ENCODE measurements at regions of chr19 and their contacts with region 1.

Region 1: DNA sequence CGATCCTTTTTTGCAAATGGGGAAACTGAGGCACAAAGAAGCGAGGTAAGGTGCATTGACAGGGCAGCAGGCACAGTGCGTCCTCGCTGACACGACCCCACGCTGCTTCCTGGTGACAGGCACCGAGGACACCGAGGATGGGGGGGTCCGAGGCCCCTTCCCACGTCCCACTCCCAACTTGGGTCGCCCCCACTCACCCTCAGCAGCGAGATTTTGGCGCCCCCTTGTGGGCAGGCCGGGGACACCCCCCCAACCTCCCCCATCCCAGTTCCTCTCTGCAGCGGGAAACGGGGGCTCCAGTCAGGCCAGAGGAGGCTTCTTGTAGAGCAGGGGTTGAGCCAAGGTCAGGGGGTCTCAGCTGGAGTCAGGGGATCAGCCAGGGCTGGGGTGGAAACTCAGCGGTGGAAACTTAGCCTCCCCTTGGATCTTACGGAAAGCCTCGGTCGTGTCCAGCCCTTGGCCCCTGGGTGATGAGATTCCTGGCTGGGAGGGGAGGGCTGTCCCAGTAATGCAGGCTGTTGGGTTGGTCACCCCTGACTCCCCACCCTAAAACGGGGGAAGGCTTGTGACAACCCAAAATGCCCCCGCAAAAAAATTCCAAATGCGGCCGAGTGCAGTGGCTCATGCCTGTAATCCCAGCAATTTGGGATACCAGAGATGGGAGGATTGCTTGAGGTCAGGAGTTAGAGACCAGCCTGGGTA is 8.2 kb downstream of the SMIM24 start:
- DNase-seq: peak; percentile 47
- ATAC-seq: no peak
- H3K4me3 Mint-ChIP-seq: no peak overlapping the region
- H3K27ac Mint-ChIP-seq: no peak overlapping the region
- H3K4me1 Mint-ChIP-seq: no peaks in the 10 kb centered on the region
- H3K27me3 Mint-ChIP-seq: no peaks in the 10 kb centered on the region
- CTCF ChIP-seq: peak; percentile 77

Region 2: DNA sequence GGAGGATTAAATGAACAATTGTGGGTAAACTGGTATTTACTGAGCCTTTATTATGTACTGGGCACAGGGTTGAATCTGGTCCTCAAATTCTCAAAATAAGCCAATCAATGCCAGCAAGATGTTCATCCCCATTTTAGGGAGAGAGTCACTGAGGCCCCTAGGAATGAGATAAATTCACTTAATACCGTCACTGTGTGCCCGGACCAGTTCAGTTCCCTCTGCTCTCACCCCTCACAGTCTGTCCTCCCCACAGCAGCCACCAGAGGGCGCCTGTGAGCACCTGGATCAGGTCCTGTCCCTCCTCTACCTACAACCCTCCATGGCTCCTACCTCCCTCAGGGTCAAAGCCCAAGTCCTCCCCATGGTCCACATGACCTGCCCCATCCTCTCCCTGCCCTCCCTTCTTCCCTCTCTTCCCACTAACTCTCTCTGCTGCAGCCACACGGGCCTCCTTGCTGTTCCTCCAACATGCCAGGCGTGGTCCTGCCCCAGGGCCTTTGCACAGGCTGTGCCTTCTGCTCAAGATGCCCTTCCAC is 147.7 kb before region 1 on chr19:
- CTCF ChIA-PET with region 1: interaction called, 12 read pairs
- POLR2A ChIA-PET with region 1: interaction called, 3 read pairs
- intact Hi-C with region 1: loop called (anchors 5 kb)
- DNase-seq: peak; percentile 88
- ATAC-seq: peak; percentile 79
- H3K4me3 Mint-ChIP-seq: no peak overlapping the region
- H3K27ac Mint-ChIP-seq: no peak overlapping the region
- H3K4me1 Mint-ChIP-seq: no peaks in the 10 kb centered on the region
- H3K27me3 Mint-ChIP-seq: peaks cover 10% of the 10 kb centered on the region
- CTCF ChIP-seq: peak; percentile 86

Region 3: GRCh38 chr19:3336680-3337523 is 135.2 kb before region 1 on chr19:
- CTCF ChIA-PET with region 1: interaction called, 10 read pairs
- POLR2A ChIA-PET with region 1: no interaction called
- intact Hi-C with region 1: no loop called
- DNase-seq: no peak
- ATAC-seq: no peak
- H3K4me3 Mint-ChIP-seq: no peak overlapping the region
- H3K27ac Mint-ChIP-seq: no peak overlapping the region
- H3K4me1 Mint-ChIP-seq: peaks cover 7% of the 10 kb centered on the region
- H3K27me3 Mint-ChIP-seq: no peaks in the 10 kb centered on the region
- CTCF ChIP-seq: no peak

Region 4: DNA sequence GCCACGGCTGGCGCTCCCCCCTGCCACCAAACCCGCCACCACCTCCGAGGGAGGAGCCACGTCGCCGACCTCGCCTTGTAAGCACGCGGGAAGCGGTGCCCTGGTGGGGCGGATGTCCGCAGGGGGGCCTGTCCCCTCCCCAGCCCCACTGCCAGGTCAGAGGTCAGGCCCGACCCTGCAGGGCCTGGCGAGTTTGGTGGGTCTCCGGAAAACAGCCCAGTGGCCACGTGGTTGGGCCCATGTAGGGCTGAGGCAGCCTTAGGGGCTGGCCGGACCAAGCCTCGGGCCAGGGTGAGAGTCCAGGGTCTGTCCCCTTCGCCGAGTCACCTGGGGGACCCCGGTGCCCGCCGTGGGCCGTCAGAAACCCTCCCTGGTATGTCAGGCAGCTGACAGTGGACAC is 18.3 kb before region 1 on chr19:
- CTCF ChIA-PET with region 1: no interaction called
- POLR2A ChIA-PET with region 1: no interaction called
- intact Hi-C with region 1: no loop called
- DNase-seq: no peak
- ATAC-seq: no peak
- H3K4me3 Mint-ChIP-seq: no peak overlapping the region
- H3K27ac Mint-ChIP-seq: no peak overlapping the region
- H3K4me1 Mint-ChIP-seq: no peaks in the 10 kb centered on the region
- H3K27me3 Mint-ChIP-seq: no peaks in the 10 kb centered on the region
- CTCF ChIP-seq: no peak

Region 5: GRCh38 chr19:3557461-3558248 is 85.5 kb after region 1 on chr19 and contains the start of gene MFSD12:
- CTCF ChIA-PET with region 1: no interaction called
- POLR2A ChIA-PET with region 1: no interaction called
- intact Hi-C with region 1: no loop called
- DNase-seq: peak; percentile 96
- ATAC-seq: peak; percentile 91
- H3K4me3 Mint-ChIP-seq: peak within 1 kb of the TSS; percentile 92
- H3K27ac Mint-ChIP-seq: peak within 1 kb of the TSS; percentile 87
- H3K4me1 Mint-ChIP-seq: peaks cover 26% of the 10 kb centered on the region
- H3K27me3 Mint-ChIP-seq: no peaks in the 10 kb centered on the region
- CTCF ChIP-seq: no peak
- total RNA-seq, gene MFSD12: 62.4 to 63.5 TPM